Activated naive CD4-positive, alpha-beta T cell treated with anti-CD3 and anti-CD28 coated beads for 36 hours (primary cell): ENCODE measurements at regions of chr11 and their contacts with region 1.

Region 1: GRCh38 chr11:48001438-48002021 is 21.2 kb downstream of the PTPRJ start:
- DNase-seq: peak; percentile 89
- H3K4me3 Mint-ChIP-seq: peak overlapping the region; percentile 66
- H3K27ac Mint-ChIP-seq: peak overlapping the region; percentile 96
- H3K4me1 Mint-ChIP-seq: peaks cover 88% of the 10 kb centered on the region
- H3K27me3 Mint-ChIP-seq: no peaks in the 10 kb centered on the region

Region 2: DNA sequence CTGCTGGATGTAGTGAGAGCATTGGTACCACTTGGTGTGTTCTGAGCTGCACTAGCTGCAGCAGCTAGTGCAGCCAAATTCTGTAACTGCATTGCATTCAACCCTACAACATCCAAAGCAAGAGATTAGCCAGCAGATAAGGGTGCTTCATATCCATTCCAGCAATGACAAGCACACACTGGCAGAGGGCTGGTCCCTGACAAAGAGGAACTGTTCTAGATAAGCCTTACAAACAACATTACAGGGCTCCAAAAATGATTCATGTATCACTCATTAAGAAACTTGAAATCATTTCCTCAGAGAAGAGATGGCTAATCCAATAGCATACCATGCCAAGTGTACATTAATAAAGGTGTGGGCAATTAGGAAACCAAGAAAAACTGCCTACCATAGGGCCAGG is 524.2 kb before region 1 on chr11:
- CTCF ChIA-PET with region 1: no interaction called
- intact Hi-C with region 1: no loop called
- DNase-seq: peak; percentile 30
- H3K4me3 Mint-ChIP-seq: no peak overlapping the region
- H3K27ac Mint-ChIP-seq: peak overlapping the region; percentile 46
- H3K4me1 Mint-ChIP-seq: peaks cover 12% of the 10 kb centered on the region
- H3K27me3 Mint-ChIP-seq: no peaks in the 10 kb centered on the region

Region 3: DNA sequence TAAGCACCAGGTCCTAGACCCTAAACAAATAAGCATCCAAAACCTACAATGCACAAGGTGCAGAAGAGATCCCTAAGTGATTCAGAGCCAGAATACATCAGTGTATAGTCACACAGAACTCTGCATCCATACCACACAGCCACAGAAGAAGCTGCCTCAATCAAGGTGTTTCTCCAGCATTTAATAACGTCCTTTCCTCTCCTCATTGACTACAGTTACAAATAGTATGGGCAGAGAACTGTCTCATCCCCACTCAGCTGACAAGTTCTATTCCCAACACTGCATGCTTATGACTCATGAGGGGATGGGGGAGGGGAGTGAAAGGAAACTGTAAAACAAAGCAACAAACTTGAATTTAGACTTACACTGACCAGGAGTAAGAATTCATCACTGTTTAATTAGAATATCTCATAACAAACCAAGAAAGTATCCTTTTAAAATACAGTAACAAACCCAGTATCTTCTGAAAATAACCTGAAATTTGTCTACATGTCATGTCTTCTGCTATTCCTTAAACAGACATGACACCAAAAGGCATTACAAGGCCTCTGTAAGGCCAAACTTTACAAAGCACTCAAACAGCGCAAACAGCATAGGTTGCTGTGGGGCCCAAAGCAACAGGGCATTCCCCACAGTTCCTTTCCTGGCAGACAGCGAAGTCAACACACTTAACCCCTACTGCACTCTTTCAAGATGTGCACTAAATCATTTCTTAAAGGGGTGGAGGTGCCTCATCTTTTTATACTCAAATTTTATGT is 477.9 kb before region 1 on chr11:
- CTCF ChIA-PET with region 1: no interaction called
- intact Hi-C with region 1: loop called (anchors 5 kb)
- DNase-seq: peak; percentile 82
- H3K4me3 Mint-ChIP-seq: peak overlapping the region; percentile 57
- H3K27ac Mint-ChIP-seq: peak overlapping the region; percentile 90
- H3K4me1 Mint-ChIP-seq: peaks cover 79% of the 10 kb centered on the region
- H3K27me3 Mint-ChIP-seq: no peaks in the 10 kb centered on the region

Region 4: GRCh38 chr11:47863189-47863892 is 138.2 kb before region 1 on chr11:
- CTCF ChIA-PET with region 1: no interaction called
- intact Hi-C with region 1: loop called (anchors 2 kb)
- DNase-seq: no peak
- H3K4me3 Mint-ChIP-seq: no peak overlapping the region
- H3K27ac Mint-ChIP-seq: no peak overlapping the region
- H3K4me1 Mint-ChIP-seq: peaks cover 33% of the 10 kb centered on the region
- H3K27me3 Mint-ChIP-seq: no peaks in the 10 kb centered on the region

Region 5: GRCh38 chr11:47981667-47982404 is 19.7 kb before region 1 on chr11:
- CTCF ChIA-PET with region 1: interaction called, 5 read pairs
- intact Hi-C with region 1: loop called (anchors 1 kb)
- DNase-seq: peak; percentile 38
- H3K4me3 Mint-ChIP-seq: peak overlapping the region; percentile 82
- H3K27ac Mint-ChIP-seq: peak overlapping the region; percentile 42
- H3K4me1 Mint-ChIP-seq: peaks cover 39% of the 10 kb centered on the region
- H3K27me3 Mint-ChIP-seq: peaks cover 3% of the 10 kb centered on the region

Region 6: GRCh38 chr11:48034926-48035871 is 33.7 kb after region 1 on chr11:
- CTCF ChIA-PET with region 1: no interaction called
- intact Hi-C with region 1: loop called (anchors 1 kb)
- DNase-seq: no peak
- H3K4me3 Mint-ChIP-seq: no peak overlapping the region
- H3K27ac Mint-ChIP-seq: no peak overlapping the region
- H3K4me1 Mint-ChIP-seq: peaks cover 66% of the 10 kb centered on the region
- H3K27me3 Mint-ChIP-seq: no peaks in the 10 kb centered on the region

Region 7: GRCh38 chr11:48109046-48109666 is 107.6 kb after region 1 on chr11:
- CTCF ChIA-PET with region 1: interaction called, 35 read pairs
- intact Hi-C with region 1: loop called (anchors 1 kb)
- DNase-seq: no peak
- H3K4me3 Mint-ChIP-seq: no peak overlapping the region
- H3K27ac Mint-ChIP-seq: peak overlapping the region; percentile 75
- H3K4me1 Mint-ChIP-seq: peaks cover 46% of the 10 kb centered on the region
- H3K27me3 Mint-ChIP-seq: no peaks in the 10 kb centered on the region